Activated CD4-positive, alpha-beta memory T cell treated with anti-CD3 and anti-CD28 coated beads for 36 hours (primary cell): ENCODE measurements at regions of chr13 and their contacts with region 1.

Region 1: DNA sequence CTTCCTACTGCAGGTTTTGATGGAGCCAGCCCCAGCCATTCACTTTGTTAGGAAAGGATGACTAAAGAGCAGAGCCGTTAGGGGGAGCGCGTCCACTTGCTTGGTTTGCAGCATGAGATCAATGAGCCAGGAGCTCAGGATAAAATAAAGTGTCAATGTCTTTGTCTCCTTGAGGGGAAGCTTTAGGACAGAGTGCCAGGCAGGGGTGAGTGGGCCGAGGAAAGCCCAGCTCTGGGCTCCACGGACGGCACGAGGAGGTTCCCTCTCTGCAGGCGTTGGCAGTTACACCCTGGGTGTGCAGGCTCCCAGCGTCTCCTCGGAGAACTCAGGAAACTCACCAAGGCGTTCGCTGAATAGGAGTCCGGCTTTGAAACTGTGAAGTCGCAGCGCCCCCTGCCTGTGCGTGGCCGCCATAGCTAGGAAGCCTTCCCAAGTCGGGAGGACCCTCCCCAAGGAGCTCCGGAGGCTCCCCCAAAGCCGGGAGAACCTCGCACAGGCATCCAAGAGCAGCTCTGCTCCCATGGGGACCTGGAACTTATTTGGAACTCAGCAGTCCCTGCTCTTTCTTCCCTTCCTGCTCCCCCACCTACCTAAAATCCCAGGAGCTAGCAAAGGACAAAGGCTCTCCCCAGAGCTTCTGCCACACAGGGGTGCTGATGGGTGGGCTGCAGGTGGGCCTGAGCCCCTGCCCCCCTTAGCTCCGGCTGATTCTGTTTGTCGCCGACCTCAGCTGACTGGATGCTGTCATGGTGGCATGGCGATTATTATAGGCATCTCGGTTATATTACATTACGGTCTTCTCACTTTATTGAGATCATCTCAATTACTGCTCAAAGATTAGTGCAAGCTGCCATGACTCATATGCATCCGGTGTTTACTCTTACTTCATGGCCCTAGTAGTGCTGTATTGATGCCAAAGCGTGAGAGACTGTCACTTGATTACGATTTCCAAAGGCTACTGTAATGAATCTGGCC is 34.4 kb downstream of the GSX1 start:
- DNase-seq: peak; percentile 76
- H3K4me3 Mint-ChIP-seq: no peak overlapping the region
- H3K27ac Mint-ChIP-seq: no peak overlapping the region
- H3K4me1 Mint-ChIP-seq: peaks cover 8% of the 10 kb centered on the region
- H3K27me3 Mint-ChIP-seq: peaks cover 56% of the 10 kb centered on the region

Region 2: GRCh38 chr13:26946684-26947343 is 879.9 kb before region 1 on chr13:
- CTCF ChIA-PET with region 1: interaction called, 11 read pairs
- POLR2A ChIA-PET with region 1: no interaction called
- intact Hi-C with region 1: no loop called
- DNase-seq: no peak
- H3K4me3 Mint-ChIP-seq: no peak overlapping the region
- H3K27ac Mint-ChIP-seq: no peak overlapping the region
- H3K4me1 Mint-ChIP-seq: no peaks in the 10 kb centered on the region
- H3K27me3 Mint-ChIP-seq: peaks cover 8% of the 10 kb centered on the region

Region 3: GRCh38 chr13:27137759-27138158 is 688.9 kb before region 1 on chr13:
- CTCF ChIA-PET with region 1: no interaction called
- POLR2A ChIA-PET with region 1: no interaction called
- intact Hi-C with region 1: no loop called
- DNase-seq: no peak
- H3K4me3 Mint-ChIP-seq: no peak overlapping the region
- H3K27ac Mint-ChIP-seq: no peak overlapping the region
- H3K4me1 Mint-ChIP-seq: peaks cover 63% of the 10 kb centered on the region
- H3K27me3 Mint-ChIP-seq: no peaks in the 10 kb centered on the region

Region 4: DNA sequence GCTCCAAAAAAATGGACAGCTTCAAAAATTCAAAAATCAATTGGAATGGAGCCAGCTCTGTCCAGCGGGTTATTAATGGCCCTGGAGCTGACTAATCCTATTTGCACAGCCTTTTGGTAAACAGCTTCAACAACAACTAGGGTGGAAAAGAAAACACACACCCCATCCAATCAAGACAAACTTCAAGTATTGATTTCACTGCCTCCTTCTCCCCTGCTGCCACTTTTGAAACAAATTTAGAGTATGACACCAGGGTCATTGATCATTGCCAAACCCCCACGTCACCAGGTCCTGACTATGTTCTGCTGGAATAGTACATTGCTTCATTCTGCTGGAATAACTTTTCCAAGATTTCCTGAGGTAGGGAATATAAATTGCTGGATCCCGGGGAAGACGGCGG is 459.1 kb before region 1 on chr13:
- CTCF ChIA-PET with region 1: interaction called, 209 read pairs
- POLR2A ChIA-PET with region 1: no interaction called
- intact Hi-C with region 1: loop called (anchors 1 kb)
- DNase-seq: no peak
- H3K4me3 Mint-ChIP-seq: no peak overlapping the region
- H3K27ac Mint-ChIP-seq: no peak overlapping the region
- H3K4me1 Mint-ChIP-seq: no peaks in the 10 kb centered on the region
- H3K27me3 Mint-ChIP-seq: peaks cover 22% of the 10 kb centered on the region

Region 5: DNA sequence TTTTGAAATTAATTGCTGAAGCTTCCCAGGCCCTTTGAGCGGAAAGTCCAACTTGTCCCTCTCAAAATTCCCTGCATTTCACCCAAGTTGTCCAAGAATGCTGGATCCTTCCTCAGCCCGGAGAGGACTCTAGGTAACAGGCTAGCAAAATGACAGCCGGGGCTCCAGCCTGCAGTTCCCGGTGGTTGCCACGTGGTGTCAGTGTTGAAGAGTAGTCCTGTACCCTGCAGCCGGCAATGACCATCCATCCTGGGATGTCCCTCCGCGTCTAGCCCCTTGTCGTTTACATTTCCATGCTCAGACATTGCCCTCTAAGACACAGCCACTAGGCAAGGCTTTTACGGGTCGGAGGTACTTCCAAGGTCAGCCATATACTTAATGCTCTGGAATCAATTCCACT is 344.9 kb before region 1 on chr13:
- CTCF ChIA-PET with region 1: interaction called, 10 read pairs
- POLR2A ChIA-PET with region 1: no interaction called
- intact Hi-C with region 1: loop called (anchors 2 kb)
- DNase-seq: peak; percentile 54
- H3K4me3 Mint-ChIP-seq: no peak overlapping the region
- H3K27ac Mint-ChIP-seq: no peak overlapping the region
- H3K4me1 Mint-ChIP-seq: peaks cover 12% of the 10 kb centered on the region
- H3K27me3 Mint-ChIP-seq: peaks cover 3% of the 10 kb centered on the region

Region 6: GRCh38 chr13:27792393-27793218 is 34.1 kb before region 1 on chr13 and contains the start of gene GSX1:
- CTCF ChIA-PET with region 1: interaction called, 15 read pairs
- POLR2A ChIA-PET with region 1: no interaction called
- intact Hi-C with region 1: no loop called
- DNase-seq: peak; percentile 68
- H3K4me3 Mint-ChIP-seq: peak within 1 kb of the TSS; percentile 66
- H3K27ac Mint-ChIP-seq: no peak within 1 kb of the TSS
- H3K4me1 Mint-ChIP-seq: peaks cover 36% of the 10 kb centered on the region
- H3K27me3 Mint-ChIP-seq: peaks cover 76% of the 10 kb centered on the region
- total RNA-seq, gene GSX1: not detected

Region 7: GRCh38 chr13:27953676-27954405 is 127.2 kb after region 1 on chr13:
- CTCF ChIA-PET with region 1: interaction called, 152 read pairs
- POLR2A ChIA-PET with region 1: no interaction called
- intact Hi-C with region 1: loop called (anchors 1 kb)
- DNase-seq: peak; percentile 75
- H3K4me3 Mint-ChIP-seq: peak overlapping the region; percentile 58
- H3K27ac Mint-ChIP-seq: no peak overlapping the region
- H3K4me1 Mint-ChIP-seq: peaks cover 10% of the 10 kb centered on the region
- H3K27me3 Mint-ChIP-seq: peaks cover 57% of the 10 kb centered on the region

Region 8: GRCh38 chr13:27977476-27978300 is 151.0 kb after region 1 on chr13:
- CTCF ChIA-PET with region 1: interaction called, 235 read pairs
- POLR2A ChIA-PET with region 1: no interaction called
- intact Hi-C with region 1: no loop called
- DNase-seq: no peak
- H3K4me3 Mint-ChIP-seq: no peak overlapping the region
- H3K27ac Mint-ChIP-seq: peak overlapping the region; percentile 74
- H3K4me1 Mint-ChIP-seq: peaks cover 26% of the 10 kb centered on the region
- H3K27me3 Mint-ChIP-seq: peaks cover 80% of the 10 kb centered on the region